ENCODE measurements at regions of chr16 and their contacts with region 1.

Region 1: DNA sequence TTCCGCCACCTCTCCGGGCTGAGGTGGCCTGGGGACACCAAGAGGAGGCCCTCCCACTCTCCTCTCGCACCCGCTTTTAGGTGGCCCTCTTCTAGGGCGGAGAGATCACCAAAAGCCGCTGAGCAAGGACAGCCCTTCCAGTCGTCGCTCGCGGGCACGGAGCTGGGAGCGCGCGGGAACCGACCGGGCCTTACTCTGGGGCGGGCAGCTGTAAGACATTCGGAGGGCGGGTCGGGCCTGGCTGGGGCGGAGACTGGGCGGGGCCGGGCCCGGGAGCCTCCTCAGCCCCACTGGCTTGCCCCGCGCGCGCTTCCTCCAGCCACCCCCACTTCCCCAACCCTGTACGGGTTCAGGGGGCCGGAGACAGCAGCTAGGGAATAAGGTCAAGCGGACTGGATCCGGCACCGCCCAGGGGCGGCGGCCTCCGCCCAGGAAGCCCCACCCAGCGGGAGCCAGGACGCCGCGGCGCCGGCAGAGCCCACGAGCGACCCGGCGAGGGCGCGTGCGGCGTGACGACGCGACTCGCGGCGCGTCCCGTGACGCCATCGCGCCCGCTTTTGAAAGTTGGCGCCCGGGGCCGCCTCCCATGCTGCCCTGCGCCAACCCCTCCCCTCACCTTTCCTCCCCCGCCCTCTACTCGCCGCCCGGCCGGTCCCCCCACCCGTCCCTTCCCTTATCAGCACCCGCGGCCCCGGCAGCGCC is 351 bp upstream of the CTCF start:
- DNase-seq: peak; percentile 97
- ATAC-seq: peak; percentile 90 to 97 (median 95)
- H3K4me3 ChIP-seq: peak overlapping the region; percentile 26 to 100 (median 98)
- H3K27ac ChIP-seq: peak overlapping the region; percentile 99 to 100 (median 100)
- H3K4me1 ChIP-seq: peaks cover 6 to 48% (median 36%) of the 10 kb centered on the region in 9 donors
- H3K27me3 ChIP-seq: no peaks in the 10 kb centered on the region
- CTCF ChIP-seq: no peak

Region 2: GRCh38 chr16:67608364-67608763 is 46.4 kb after region 1 on chr16:
- intact Hi-C with region 1: no loop called
- DNase-seq: no peak
- ATAC-seq: no peak
- H3K4me3 ChIP-seq: no peak overlapping the region
- H3K27ac ChIP-seq: no peak overlapping the region
- H3K4me1 ChIP-seq: peaks cover 0 to 14% (median 0%) of the 10 kb centered on the region in 9 donors
- H3K27me3 ChIP-seq: no peaks in the 10 kb centered on the region
- CTCF ChIP-seq: no peak

Region 3: DNA sequence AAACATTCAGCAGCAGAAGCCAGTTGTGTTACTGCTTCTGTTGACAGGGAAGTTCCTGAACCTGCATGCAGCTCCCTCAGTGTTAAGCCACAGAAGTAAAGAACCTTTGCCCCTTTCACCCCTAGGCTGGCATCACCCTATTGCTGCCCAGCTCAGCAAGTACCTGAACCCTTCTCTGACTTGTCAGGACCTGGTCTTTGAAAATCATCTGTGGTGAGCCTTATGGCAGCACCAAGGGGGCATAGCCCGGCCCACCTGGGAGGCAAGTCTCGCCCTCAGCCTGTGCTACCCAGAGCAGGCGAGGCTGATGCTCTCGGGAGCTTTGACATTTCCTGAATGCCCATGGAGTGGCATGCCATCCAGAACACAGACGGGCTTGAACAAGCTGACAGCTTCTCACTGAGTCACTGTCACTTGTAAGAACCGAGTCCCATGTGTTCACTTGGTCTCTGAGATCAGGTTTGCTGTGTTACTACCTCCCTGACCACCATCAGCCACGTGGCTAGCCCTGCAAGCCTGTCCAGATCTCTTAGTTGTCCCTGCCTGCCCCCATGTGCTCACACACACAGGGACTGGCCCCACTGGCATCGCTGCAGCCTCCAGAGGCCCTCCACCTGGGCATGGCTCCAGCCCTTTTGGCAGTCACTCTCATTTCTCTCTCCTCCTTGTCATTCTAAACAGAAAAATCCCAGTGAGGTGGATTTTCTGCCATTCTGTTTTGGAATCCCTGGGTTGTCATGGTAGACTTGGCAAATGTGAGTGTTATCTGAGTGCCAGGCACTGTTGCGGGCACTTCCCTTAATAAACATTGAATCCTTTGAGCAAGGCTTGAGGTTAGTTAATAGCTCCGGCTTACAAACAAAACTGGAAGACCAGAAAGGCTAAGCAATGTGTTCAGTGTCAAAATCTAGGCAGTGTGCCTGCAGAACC is 80.1 kb after region 1 on chr16:
- intact Hi-C with region 1: loop called in 6 of 10 experiments (anchors 5 kb)
- DNase-seq: peak; percentile 78 to 81
- ATAC-seq: peak; percentile 72 to 97 (median 91)
- H3K4me3 ChIP-seq: no peak overlapping the region
- H3K27ac ChIP-seq: peak overlapping the region in 7 of 10 donors; percentile 25 to 58 (median 37)
- H3K4me1 ChIP-seq: peaks cover 0 to 37% (median 17%) of the 10 kb centered on the region in 9 donors
- H3K27me3 ChIP-seq: peaks cover 9 to 28% (median 23%) of the 10 kb centered on the region in 7 donors
- CTCF ChIP-seq: peak in 1 of 9 donors; percentile 11

Region 4: DNA sequence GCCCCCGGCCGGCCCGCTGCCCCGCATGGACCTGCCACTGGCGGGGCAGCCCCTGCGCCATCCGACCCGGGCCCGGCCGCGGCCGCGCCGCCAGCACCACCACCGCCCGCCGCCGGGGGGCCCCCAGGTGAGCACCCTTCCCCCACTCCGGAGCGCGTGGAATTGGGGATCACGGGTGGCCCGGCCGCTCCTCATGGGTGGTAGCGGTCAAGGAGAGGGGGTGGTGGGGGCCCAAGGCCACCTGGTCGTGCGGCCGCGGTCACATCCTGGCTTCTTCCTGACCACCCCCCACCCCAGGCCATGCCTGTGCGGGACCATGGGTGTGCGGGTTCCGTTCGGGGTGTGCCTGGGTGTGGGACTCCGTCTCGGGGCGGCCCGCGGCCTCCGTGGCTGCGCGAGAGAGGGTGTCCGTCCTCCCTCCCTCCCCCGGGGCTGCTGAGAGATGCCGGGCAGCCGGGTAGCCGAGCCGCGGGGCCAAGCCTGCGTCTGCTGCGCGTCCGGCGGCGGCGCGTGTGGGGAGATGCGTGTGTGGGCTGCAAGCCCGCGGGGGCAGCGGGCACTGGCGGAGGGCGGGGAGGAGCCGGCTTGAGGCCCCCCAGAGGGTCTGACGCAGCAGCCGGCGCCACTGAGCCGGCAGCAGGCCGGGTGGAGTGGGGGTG is 91.3 kb after region 1 on chr16:
- intact Hi-C with region 1: loop called in 2 of 10 experiments (anchors 5 to 10 kb)
- DNase-seq: peak in 1 of 2 donors; percentile 18
- ATAC-seq: peak in 1 of 8 donors; percentile 14
- H3K4me3 ChIP-seq: peak overlapping the region; percentile 9 to 51 (median 38)
- H3K27ac ChIP-seq: no peak overlapping the region
- H3K4me1 ChIP-seq: peaks cover 3 to 27% (median 12%) of the 10 kb centered on the region in 9 donors
- H3K27me3 ChIP-seq: peaks cover 10 to 79% (median 69%) of the 10 kb centered on the region in 7 donors
- CTCF ChIP-seq: peak in 3 of 9 donors; percentile 10 to 31 (median 16)

Region 5: DNA sequence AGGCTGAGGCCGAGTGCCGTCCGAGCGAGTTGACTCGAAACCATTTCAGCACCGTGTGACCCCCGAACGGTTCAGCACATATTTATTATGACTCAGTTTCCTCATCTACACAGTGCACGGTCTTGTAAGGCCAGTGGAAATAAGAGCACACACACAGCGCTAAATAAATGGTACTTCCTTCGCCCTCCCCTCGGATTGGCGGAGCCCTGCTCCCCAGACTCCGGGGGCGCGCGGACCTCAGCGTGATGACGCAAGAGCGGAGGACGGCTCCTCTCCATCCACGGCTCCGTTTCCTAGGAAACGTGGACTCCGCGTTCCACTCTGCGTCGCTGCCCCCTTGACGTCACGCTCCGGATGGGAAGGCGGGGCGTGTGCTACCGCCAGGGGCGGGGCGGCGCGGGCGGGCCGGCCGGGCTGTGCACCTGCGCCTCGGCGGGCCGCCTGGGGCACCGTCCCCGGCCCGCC is 98.6 kb after region 1 on chr16 and contains the start of gene PARD6A:
- intact Hi-C with region 1: loop called in 6 of 10 experiments (anchors 1 to 10 kb)
- DNase-seq: peak; percentile 95 to 96
- ATAC-seq: peak; percentile 81 to 97 (median 92)
- H3K4me3 ChIP-seq: peak within 1 kb of the TSS; percentile 60 to 95 (median 82)
- H3K27ac ChIP-seq: peak within 1 kb of the TSS; percentile 77 to 97 (median 90)
- H3K4me1 ChIP-seq: peaks cover 14 to 28% (median 21%) of the 10 kb centered on the region in 9 donors
- H3K27me3 ChIP-seq: peaks cover 0 to 6% (median 0%) of the 10 kb centered on the region in 7 donors
- CTCF ChIP-seq: no peak
- total RNA-seq, gene PARD6A: 1.7 to 5.9 (median 2.2) TPM

Region 6: GRCh38 chr16:67667817-67668494 is 106.0 kb after region 1 on chr16:
- intact Hi-C with region 1: loop called in 4 of 10 experiments (anchors 2 to 5 kb)
- DNase-seq: peak; percentile 82 to 86
- ATAC-seq: peak; percentile 83 to 91 (median 88)
- H3K4me3 ChIP-seq: peak overlapping the region in 9 of 10 donors; percentile 58 to 92 (median 87)
- H3K27ac ChIP-seq: peak overlapping the region; percentile 81 to 98 (median 94)
- H3K4me1 ChIP-seq: peaks cover 10 to 46% (median 32%) of the 10 kb centered on the region in 9 donors
- H3K27me3 ChIP-seq: no peaks in the 10 kb centered on the region
- CTCF ChIP-seq: peak; percentile 67 to 93 (median 84)